Naive thymus-derived CD4-positive, alpha-beta T cell (primary cell): ENCODE measurements at regions of chr7 and their contacts with region 1.

Region 1: DNA sequence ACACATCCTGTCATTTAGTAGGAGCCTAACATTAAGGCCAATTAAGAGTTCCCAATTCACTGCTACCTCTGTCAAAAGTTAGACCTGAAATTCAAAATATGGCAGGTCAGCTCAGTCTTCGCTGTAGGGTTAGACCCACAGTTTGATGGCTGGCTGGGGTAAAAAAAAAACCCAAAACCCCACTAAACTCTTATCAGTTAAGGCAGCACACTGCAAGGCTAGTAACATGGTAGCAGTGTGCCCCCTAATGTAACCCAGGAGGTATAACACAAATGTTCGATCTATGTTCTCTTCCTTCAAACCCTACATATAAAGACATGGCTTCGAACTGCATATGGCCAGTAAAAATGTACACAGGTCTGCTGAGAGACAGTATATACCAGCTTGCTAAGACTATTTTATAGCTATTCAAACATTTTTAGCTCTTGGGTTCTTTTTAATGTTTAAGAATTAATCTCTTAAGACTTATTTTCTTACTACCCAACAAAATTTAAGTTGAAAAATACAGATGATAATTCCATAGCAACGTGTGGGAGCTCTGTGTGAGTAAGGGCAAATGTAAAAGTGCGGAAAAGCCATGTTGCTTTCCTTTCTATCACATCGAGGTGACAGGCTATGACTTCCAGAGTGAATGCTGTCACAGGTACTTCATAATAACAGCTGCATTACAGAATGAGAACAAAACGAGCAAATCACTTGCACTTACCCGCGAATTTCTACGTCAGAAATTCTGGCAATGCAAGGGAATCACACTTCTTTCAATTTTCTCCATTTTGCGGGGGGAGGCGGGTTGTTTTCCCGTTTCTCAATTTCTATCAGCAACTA is 168.4 kb upstream of the IMMP2L start:
- DNase-seq: peak in 2 of 9 donors; percentile 6 to 9
- ATAC-seq: no peak
- H3K4me3 ChIP-seq: no peak overlapping the region
- H3K4me3 Mint-ChIP-seq: no peak overlapping the region
- H3K27ac ChIP-seq: no peak overlapping the region
- H3K27ac Mint-ChIP-seq: no peak overlapping the region
- H3K4me1 ChIP-seq: no peaks in the 10 kb centered on the region
- H3K4me1 Mint-ChIP-seq: no peaks in the 10 kb centered on the region
- H3K27me3 ChIP-seq: no peaks in the 10 kb centered on the region
- H3K27me3 Mint-ChIP-seq: peaks cover 0 to 14% (median 0%) of the 10 kb centered on the region in 5 donors

Region 2: DNA sequence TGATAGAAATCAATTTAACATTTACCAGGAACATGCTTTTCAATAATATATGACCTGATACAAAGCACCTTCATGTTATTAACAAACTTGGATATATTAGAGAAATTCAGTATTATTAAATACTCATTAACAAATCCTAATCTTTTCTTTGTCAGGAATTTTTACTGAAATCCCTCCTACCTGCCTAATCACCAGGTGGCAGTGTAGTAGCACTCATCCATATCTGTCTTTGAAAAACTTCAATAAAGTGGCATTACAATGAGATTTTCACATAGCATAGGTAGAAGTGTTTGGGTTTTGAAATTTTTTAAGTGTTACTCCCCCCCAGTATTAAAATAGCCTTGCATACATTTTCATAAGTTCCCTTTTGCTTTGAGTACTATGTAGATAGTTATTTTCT is 1886.3 kb before region 1 on chr7:
- CTCF ChIA-PET with region 1: interaction called, 6 read pairs
- POLR2A ChIA-PET with region 1: no interaction called
- intact Hi-C with region 1: loop called in 1 of 2 experiments (anchors 1 kb)
- DNase-seq: peak in 4 of 9 donors; percentile 3 to 25 (median 6)
- ATAC-seq: no peak
- H3K4me3 ChIP-seq: no peak overlapping the region
- H3K4me3 Mint-ChIP-seq: no peak overlapping the region
- H3K27ac ChIP-seq: no peak overlapping the region
- H3K27ac Mint-ChIP-seq: no peak overlapping the region
- H3K4me1 ChIP-seq: no peaks in the 10 kb centered on the region
- H3K4me1 Mint-ChIP-seq: no peaks in the 10 kb centered on the region
- H3K27me3 ChIP-seq: no peaks in the 10 kb centered on the region
- H3K27me3 Mint-ChIP-seq: peaks cover 0 to 18% (median under 1%) of the 10 kb centered on the region in 5 donors

Region 3: GRCh38 chr7:111223802-111224253 is 506.9 kb before region 1 on chr7:
- CTCF ChIA-PET with region 1: no interaction called
- POLR2A ChIA-PET with region 1: no interaction called
- intact Hi-C with region 1: no loop called
- DNase-seq: no peak
- ATAC-seq: peak; percentile 59
- H3K4me3 ChIP-seq: no peak overlapping the region
- H3K4me3 Mint-ChIP-seq: no peak overlapping the region
- H3K27ac ChIP-seq: no peak overlapping the region
- H3K27ac Mint-ChIP-seq: no peak overlapping the region
- H3K4me1 ChIP-seq: no peaks in the 10 kb centered on the region
- H3K4me1 Mint-ChIP-seq: peaks cover 0 to 7% (median 0%) of the 10 kb centered on the region in 7 donors
- H3K27me3 ChIP-seq: no peaks in the 10 kb centered on the region
- H3K27me3 Mint-ChIP-seq: no peaks in the 10 kb centered on the region

Region 4: DNA sequence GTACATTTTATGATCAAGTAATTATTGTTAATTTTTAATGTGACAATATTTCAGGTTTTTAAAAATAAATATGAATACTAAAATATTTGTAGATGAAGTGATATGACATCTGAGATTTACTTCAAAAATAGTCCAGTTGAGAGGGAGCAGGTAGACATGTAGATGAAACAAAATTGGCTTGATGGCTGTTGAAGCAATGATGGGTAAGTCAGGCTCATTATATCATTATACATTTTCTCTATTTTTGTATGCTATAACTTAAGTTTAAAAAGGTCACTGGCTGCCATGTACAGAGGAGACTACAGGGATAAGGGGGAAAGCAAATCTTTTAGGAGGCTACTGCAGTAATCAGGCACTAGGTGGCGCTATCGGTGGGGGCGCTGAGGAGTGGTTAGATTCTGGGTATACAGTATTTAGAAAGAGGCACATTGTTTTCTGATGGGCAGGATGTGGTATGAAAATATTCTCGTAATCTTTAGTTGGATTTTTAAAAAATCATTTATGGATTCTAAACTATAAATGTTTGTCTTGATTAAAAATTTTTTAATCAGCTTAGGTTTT is 21.4 kb after region 1 on chr7:
- CTCF ChIA-PET with region 1: no interaction called
- POLR2A ChIA-PET with region 1: no interaction called
- intact Hi-C with region 1: no loop called
- DNase-seq: peak; percentile 14 to 58 (median 27)
- ATAC-seq: peak; percentile 75
- H3K4me3 ChIP-seq: no peak overlapping the region
- H3K4me3 Mint-ChIP-seq: no peak overlapping the region
- H3K27ac ChIP-seq: no peak overlapping the region
- H3K27ac Mint-ChIP-seq: no peak overlapping the region
- H3K4me1 ChIP-seq: no peaks in the 10 kb centered on the region
- H3K4me1 Mint-ChIP-seq: no peaks in the 10 kb centered on the region
- H3K27me3 ChIP-seq: no peaks in the 10 kb centered on the region
- H3K27me3 Mint-ChIP-seq: peaks cover 2 to 16% (median 15%) of the 10 kb centered on the region in 5 donors